Upper lobe of right lung (tissue), 1 donor: ENCODE measurements at regions of chr12 and their contacts with region 1.

Region 1: GRCh38 chr12:40946612-40947194 is 241.4 kb upstream of the PDZRN4 start:
- DNase-seq: no peak
- ATAC-seq: no peak
- H3K4me3 ChIP-seq: no peak overlapping the region
- H3K27ac ChIP-seq: no peak overlapping the region
- H3K4me1 ChIP-seq: no peaks in the 10 kb centered on the region
- H3K27me3 ChIP-seq: no peaks in the 10 kb centered on the region
- CTCF ChIP-seq: peak; percentile 72

Region 2: DNA sequence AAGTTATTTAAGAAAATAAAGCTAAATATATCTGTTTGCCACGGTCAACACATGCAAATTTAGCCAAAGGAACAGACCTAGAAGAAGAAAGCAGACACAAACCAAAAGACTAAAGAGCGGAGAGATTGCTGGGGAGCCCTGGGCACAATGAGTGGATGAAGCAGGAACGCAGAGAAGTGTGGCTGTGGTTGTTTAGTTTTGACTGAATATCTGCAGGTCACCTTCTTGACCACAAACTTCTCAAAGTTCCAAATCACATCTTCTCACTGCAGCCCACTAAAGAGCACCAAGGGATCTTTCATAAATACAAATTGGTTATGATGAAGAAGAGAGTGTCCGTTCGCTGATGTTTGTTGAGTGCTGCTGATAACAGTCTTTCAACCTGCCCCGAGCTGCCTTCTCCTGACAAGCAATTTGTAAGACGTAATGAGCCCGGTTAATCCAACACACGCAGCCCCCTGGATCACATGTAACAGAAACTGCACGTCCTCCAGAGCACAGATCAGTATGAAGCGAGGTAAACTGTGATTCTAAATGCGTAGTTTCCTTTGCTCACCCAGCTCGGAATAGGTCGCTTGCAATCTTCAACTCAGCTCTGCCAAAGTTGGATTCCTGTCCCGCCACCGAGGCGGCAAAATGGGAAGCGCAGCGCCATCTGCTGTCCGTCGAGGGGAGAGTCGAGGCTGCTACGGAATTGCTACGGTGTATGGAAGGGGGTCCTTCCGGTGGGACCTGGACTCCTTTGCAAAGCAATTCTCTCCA is 1077.2 kb after region 1 on chr12:
- intact Hi-C with region 1: loop called (anchors 10 kb)
- DNase-seq: peak; percentile 83
- ATAC-seq: peak; percentile 95
- H3K4me3 ChIP-seq: peak overlapping the region; percentile 46
- H3K27ac ChIP-seq: no peak overlapping the region
- H3K4me1 ChIP-seq: no peaks in the 10 kb centered on the region
- H3K27me3 ChIP-seq: no peaks in the 10 kb centered on the region
- CTCF ChIP-seq: peak; percentile 96